Calu3 (cell line): ENCODE measurements at regions of chr3 and their contacts with region 1.

Region 1: GRCh38 chr3:51637941-51638471 is 33.0 kb upstream of the TEX264 start:
- DNase-seq: peak; percentile 58
- H3K4me3 Mint-ChIP-seq: no peak overlapping the region
- H3K27ac Mint-ChIP-seq: no peak overlapping the region
- H3K4me1 Mint-ChIP-seq: no peaks in the 10 kb centered on the region
- H3K27me3 Mint-ChIP-seq: no peaks in the 10 kb centered on the region
- CTCF ChIP-seq: peak; percentile 78

Region 2: GRCh38 chr3:51408813-51409212 is 229.2 kb before region 1 on chr3:
- CTCF ChIA-PET with region 1: no interaction called
- intact Hi-C with region 1: no loop called
- DNase-seq: no peak
- H3K4me3 Mint-ChIP-seq: no peak overlapping the region
- H3K27ac Mint-ChIP-seq: no peak overlapping the region
- H3K4me1 Mint-ChIP-seq: no peaks in the 10 kb centered on the region
- H3K27me3 Mint-ChIP-seq: no peaks in the 10 kb centered on the region
- CTCF ChIP-seq: no peak

Region 3: DNA sequence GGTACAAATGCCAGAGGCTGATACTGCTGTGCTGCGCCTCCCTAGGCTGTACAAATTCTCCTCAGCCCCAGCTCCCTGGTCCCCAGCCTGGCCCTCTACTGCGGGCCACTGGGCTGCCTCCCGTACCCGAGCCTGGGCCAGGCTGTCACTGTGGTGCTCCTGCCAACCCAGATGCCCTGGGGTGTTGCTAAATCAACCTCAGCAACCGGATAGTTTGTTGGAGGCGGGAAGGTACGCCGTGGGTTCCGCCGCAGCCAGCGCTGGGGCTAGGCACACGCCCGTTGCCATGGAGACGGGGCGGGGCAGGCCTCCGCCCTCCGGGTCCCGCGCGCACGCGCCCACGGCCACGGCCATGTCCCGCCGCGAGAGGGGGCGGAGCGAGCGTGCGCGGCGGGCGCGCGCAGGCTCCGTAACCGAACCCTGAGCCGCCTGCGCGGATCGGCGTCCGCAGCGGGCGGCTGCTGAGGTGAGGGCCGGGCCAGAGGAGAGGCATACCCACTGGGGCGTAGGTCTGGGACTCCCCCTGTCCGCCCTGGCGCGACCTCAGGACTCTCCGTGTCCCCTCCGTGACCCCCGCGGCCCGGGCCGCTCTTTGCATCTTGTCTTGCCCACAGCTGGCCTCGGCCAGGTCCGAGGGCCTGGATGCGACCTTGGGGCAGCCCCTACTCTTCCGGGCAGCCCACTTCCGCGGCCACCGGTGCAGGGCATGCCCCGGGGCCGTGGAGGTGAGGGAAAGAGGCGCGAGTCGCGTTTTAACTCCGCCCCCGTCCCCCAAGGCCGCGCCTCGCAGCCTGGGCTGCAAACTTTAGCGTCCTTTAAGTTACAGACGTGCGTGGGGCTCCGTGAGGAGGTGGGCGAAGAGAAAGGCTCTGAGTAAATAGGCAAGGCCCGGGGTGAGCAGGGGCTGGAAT is 33.1 kb after region 1 on chr3 and contains the start of gene TEX264:
- CTCF ChIA-PET with region 1: interaction called, 3 read pairs
- intact Hi-C with region 1: loop called (anchors 1 kb)
- DNase-seq: peak; percentile 89
- H3K4me3 Mint-ChIP-seq: peak within 1 kb of the TSS; percentile 97
- H3K27ac Mint-ChIP-seq: peak within 1 kb of the TSS; percentile 76
- H3K4me1 Mint-ChIP-seq: peaks cover 26% of the 10 kb centered on the region
- H3K27me3 Mint-ChIP-seq: no peaks in the 10 kb centered on the region
- CTCF ChIP-seq: no peak
- total RNA-seq, gene TEX264: 37.0 and 44.9 TPM in 2 replicates

Region 4: DNA sequence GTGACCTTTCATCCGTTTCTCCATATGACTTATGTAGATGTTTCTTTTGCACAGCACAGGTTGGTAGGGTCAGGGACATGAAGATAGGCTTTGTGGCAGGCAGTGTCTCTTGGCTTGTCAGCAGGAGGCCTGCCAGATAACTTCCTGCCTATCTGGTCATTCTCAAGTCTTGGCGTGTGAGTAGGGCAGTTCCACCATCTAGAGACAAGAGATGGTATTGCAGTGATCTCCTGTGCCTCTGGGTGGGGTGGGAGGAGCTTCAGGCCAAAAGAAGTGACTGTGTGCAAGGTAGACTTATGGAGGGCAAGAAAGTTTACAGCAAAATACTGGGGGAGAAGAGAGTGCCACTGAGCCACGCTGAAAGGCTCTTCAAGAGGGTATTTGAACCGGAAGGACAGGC is 44.1 kb after region 1 on chr3:
- CTCF ChIA-PET with region 1: interaction called, 5 read pairs
- intact Hi-C with region 1: loop called (anchors 5 kb)
- DNase-seq: peak; percentile 67
- H3K4me3 Mint-ChIP-seq: no peak overlapping the region
- H3K27ac Mint-ChIP-seq: no peak overlapping the region
- H3K4me1 Mint-ChIP-seq: peaks cover 19% of the 10 kb centered on the region
- H3K27me3 Mint-ChIP-seq: no peaks in the 10 kb centered on the region
- CTCF ChIP-seq: peak; percentile 54

Region 5: DNA sequence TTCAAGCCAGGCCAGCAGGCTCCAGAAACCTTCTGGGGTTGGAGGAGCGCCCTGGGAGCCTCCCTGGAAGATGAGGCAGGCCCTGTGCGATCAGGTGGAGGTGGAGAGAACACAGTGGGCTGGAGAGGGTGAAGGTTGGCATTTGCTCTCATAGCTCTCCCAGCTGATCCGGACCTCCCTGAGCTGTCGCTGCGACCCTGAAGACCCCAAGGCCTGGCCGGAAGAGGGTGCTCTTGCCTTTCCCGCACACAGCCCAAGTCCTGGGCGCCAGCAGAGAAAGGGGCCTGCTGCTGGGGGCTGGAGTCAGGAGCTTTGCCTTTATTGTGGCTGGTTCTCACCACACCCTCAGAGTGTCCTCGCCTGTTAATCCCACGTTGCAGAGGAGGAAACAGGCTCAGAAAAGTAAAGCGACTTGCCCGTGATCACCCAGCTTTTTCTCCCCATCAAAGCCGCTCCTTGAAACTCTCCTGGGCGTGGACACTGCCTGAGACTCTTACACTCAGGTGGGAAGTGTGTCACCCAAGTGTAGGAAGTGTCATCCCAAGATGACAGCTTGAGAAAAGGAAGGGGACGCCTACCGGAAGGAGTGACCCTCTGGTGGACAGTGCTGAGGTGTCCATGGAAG is 366.3 kb after region 1 on chr3:
- CTCF ChIA-PET with region 1: no interaction called
- intact Hi-C with region 1: no loop called
- DNase-seq: no peak
- H3K4me3 Mint-ChIP-seq: no peak overlapping the region
- H3K27ac Mint-ChIP-seq: no peak overlapping the region
- H3K4me1 Mint-ChIP-seq: peaks cover 19% of the 10 kb centered on the region
- H3K27me3 Mint-ChIP-seq: peaks cover 15% of the 10 kb centered on the region
- CTCF ChIP-seq: no peak